ENCODE measurements at regions of chr2 and their contacts with region 1.

Region 1: DNA sequence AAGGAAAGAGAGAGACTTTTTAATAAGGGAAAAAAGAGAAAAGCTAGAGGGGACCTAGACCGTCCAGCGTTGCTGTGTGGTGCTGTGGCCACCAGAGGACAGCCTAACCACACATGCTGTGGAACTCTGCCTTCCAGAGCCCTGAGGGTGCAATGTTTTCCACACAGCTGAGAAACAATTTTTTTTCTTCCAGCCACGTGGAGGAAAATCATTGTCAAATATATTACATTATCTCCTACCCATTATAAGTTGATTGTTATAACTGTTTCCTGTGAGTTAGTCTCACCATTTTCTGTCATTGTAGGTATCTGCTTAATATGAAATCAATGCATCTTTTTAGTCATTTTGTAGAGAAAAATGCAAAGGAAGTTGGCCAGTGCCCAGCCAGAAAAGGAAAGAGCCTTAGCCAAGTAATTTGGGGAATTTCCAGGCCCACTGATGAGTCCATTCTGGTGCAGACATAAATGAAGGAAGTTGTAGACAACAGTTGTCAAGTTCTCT is 5.9 kb upstream of the MRPL19 start:
- DNase-seq: peak; percentile 28 to 71
- ATAC-seq: peak; percentile 86 to 99 (median 96)
- H3K4me3 ChIP-seq: no peak overlapping the region
- H3K4me3 Mint-ChIP-seq: no peak overlapping the region
- H3K27ac ChIP-seq: no peak overlapping the region
- H3K27ac Mint-ChIP-seq: no peak overlapping the region
- H3K4me1 ChIP-seq: no peaks in the 10 kb centered on the region
- H3K4me1 Mint-ChIP-seq: peaks cover 0 to 5% of the 10 kb centered on the region in 2 donors
- H3K27me3 ChIP-seq: no peaks in the 10 kb centered on the region
- H3K27me3 Mint-ChIP-seq: peaks cover 30 to 37% of the 10 kb centered on the region in 2 donors
- CTCF ChIP-seq: peak; percentile 92

Region 2: GRCh38 chr2:75654012-75654411 is 13.3 kb after region 1 on chr2:
- intact Hi-C with region 1: no loop called
- DNase-seq: no peak
- ATAC-seq: no peak
- H3K4me3 ChIP-seq: no peak overlapping the region
- H3K4me3 Mint-ChIP-seq: no peak overlapping the region
- H3K27ac ChIP-seq: no peak overlapping the region
- H3K27ac Mint-ChIP-seq: no peak overlapping the region
- H3K4me1 ChIP-seq: no peaks in the 10 kb centered on the region
- H3K4me1 Mint-ChIP-seq: peaks cover 23 to 28% of the 10 kb centered on the region in 2 donors
- H3K27me3 ChIP-seq: no peaks in the 10 kb centered on the region
- H3K27me3 Mint-ChIP-seq: no peaks in the 10 kb centered on the region
- CTCF ChIP-seq: no peak

Region 3: GRCh38 chr2:75676464-75676863 is 35.8 kb after region 1 on chr2:
- intact Hi-C with region 1: loop called (anchors 1 kb)
- DNase-seq: no peak
- ATAC-seq: no peak
- H3K4me3 ChIP-seq: no peak overlapping the region
- H3K4me3 Mint-ChIP-seq: no peak overlapping the region
- H3K27ac ChIP-seq: no peak overlapping the region
- H3K27ac Mint-ChIP-seq: no peak overlapping the region
- H3K4me1 ChIP-seq: no peaks in the 10 kb centered on the region
- H3K4me1 Mint-ChIP-seq: peaks cover 4% of the 10 kb centered on the region in 2 donors
- H3K27me3 ChIP-seq: no peaks in the 10 kb centered on the region
- H3K27me3 Mint-ChIP-seq: no peaks in the 10 kb centered on the region
- CTCF ChIP-seq: no peak

Region 4: GRCh38 chr2:75710577-75711253 is 70.0 kb after region 1 on chr2 and contains the start of gene GCFC2:
- intact Hi-C with region 1: loop called (anchors 2 kb)
- DNase-seq: peak; percentile 83 to 90
- ATAC-seq: peak; percentile 86 to 91 (median 87)
- H3K4me3 ChIP-seq: peak within 1 kb of the TSS; percentile 58
- H3K4me3 Mint-ChIP-seq: peak within 1 kb of the TSS; percentile 90
- H3K27ac ChIP-seq: peak within 1 kb of the TSS; percentile 92
- H3K27ac Mint-ChIP-seq: peak within 1 kb of the TSS; percentile 85 to 96
- H3K4me1 ChIP-seq: peaks cover 5% of the 10 kb centered on the region
- H3K4me1 Mint-ChIP-seq: peaks cover 23 to 26% of the 10 kb centered on the region in 2 donors
- H3K27me3 ChIP-seq: no peaks in the 10 kb centered on the region
- H3K27me3 Mint-ChIP-seq: peaks cover 6 to 9% of the 10 kb centered on the region in 2 donors
- CTCF ChIP-seq: peak; percentile 33
- total RNA-seq, gene GCFC2: 12.0 to 16.2 (median 13.5) TPM